ENCODE measurements at regions of chr19 and their contacts with region 1.

Region 1: DNA sequence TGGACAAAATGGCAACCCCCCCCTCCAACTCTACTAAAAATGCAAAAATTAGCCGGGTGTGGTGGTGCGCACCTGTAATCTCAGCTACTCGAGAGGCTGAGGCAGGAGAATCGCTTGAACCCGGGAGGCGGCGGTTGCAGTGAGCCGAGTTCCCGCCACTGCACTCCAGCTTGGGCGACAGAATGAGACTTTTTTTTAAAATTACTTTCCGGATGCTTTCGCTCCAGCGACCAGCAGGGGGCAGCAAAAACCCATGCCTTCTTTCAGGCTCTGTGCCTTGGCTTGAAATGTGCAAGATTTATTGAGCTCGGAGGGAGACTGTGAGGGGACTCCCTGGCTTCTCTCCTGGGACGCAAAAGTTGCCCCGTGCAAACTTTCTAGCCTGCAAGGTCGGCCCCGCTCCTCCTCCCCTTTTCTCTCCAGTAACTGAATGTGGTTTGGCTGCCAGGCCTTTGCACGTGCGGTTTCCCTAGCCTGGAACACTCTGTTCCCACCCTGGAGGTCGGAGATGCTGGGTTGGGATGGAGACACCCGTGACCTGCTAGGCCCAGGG is 61.4 kb upstream of the NFIC start:
- DNase-seq: peak; percentile 67

Region 2: DNA sequence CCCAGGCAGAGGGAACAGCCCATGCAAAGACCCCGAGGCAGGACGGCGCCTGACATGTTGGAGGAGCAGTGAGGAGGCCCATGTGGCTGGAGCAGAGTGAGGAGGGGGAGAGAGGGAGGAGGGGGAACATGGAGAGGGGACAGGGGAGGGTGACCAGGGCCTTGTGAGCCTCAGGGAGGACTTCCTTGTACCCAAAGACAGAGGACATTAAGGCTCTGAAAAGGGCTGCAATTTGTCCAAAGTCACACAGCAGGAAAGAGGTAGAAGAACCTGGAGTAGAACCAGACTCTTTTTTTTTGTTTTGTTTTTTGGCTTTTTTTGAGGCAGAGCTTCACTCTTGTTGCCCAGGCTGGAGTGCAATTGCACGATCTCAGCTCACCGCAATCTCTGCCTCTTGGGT is 13.3 kb before region 1 on chr19:
- CTCF ChIA-PET with region 1: interaction called, 13 read pairs
- POLR2A ChIA-PET with region 1: no interaction called
- DNase-seq: no peak

Measured in HEK293T (cell line).